ENCODE measurements at regions of chr18 and their contacts with region 1.

Region 1: DNA sequence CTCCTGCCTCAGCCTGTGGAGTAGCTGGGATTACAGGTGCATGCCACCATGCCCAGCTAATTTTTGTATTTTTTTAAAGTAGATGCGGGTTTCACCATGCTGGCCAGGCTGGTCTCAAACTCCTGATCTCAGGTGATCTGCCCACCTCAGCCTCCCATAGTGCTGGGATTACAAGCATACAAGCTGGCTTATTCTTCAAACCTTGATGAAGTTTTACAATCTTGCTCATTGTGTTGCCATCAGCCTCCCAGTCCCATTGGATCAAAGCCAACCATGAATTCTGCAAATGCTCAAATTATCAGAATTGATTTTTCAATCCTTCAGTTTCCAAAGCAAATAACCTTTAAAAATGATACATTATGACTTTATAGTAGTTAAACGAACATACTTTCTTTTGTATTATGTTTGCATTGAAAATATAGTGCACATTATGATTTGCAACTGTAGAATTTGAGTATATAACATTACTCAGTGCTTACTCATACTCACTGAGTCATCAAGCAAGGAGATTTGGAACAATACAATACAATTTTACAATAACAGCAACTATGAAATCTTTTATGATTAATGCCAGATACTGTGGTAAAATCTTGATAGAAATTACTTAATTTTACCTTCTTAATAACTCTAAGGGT is 1491.9 kb upstream of the CELF4 start:
- DNase-seq: peak; percentile 81
- H3K4me3 ChIP-seq: no peak overlapping the region
- H3K27ac ChIP-seq: peak overlapping the region; percentile 88
- H3K4me1 ChIP-seq: peaks cover 27% of the 10 kb centered on the region
- H3K27me3 ChIP-seq: peaks cover 3 to 7% of the 10 kb centered on the region in 2 experiments
- CTCF ChIP-seq: no peak
- POLR2A ChIP-seq: no peak

Region 2: DNA sequence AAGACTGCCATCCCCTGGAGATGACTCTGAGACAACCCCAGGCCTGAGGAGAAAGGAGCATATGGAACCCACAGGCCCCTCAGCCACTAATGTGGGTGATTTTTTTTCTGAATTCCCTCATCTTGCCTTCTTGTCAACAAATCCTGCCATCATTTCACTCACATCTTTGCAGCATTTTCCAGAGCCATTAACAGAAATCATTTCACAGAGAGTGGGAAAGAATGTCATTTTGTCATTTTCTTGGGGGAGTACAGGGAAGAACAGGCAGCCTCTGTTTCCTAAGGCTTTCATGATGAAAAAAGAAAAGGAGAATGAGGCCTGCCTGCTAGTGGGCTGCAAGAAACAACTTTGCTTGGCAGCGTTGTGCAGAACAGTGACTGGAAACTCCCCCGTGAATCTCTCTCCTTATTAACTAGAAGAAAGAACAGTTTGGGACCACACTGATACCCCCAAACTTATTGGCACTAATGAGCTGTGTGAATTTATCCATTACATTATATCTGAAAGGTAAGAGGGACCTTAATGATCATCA is 27.4 kb before region 1 on chr18:
- CTCF ChIA-PET with region 1: no interaction called
- POLR2A ChIA-PET with region 1: no interaction called
- dilution Hi-C with region 1: no loop called
- intact Hi-C with region 1: no loop called
- DNase-seq: no peak
- H3K4me3 ChIP-seq: no peak overlapping the region
- H3K27ac ChIP-seq: no peak overlapping the region
- H3K4me1 ChIP-seq: no peaks in the 10 kb centered on the region
- H3K27me3 ChIP-seq: no peaks in the 10 kb centered on the region
- CTCF ChIP-seq: no peak
- POLR2A ChIP-seq: no peak

Region 3: DNA sequence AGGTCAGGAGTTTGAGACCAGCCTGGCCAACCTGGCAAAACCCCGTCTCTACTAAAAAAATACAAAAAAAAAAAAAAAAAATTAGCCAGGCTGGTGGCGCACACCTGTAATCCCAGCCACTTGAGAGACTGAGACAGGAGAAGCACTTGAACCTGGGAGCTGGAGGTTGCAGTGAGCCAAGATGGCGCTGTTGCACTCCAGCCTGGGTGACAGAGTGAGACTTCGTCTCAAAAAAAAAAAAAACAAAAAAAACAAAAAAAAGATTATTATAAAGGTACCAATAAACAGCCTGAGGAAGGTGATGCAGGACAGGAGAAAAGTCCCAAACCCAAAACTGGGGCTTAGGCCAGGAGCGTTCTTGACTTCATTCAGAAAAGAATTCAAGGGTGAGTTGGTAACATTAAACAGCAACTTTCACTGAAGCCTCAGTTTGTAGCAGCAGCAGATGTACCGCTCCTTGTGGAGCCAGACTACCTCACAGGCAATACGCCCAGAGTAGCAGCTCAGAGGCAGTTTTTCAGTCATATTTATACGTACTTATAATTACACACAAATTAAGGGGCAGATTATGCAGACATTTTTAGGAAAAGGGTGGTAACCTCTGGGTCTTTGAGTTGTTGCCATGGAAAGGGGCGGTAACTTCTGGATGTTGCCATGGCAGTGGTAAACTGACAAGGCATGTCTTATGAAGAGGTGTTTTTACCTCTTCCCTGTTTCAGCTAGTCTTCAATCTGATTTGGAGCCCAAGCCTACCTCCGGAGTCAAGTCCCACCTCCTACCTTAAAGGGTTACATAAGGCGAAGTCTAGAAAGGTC is 104.7 kb after region 1 on chr18:
- CTCF ChIA-PET with region 1: no interaction called
- POLR2A ChIA-PET with region 1: no interaction called
- dilution Hi-C with region 1: no loop called
- intact Hi-C with region 1: no loop called
- DNase-seq: no peak
- H3K4me3 ChIP-seq: no peak overlapping the region
- H3K27ac ChIP-seq: no peak overlapping the region
- H3K4me1 ChIP-seq: no peaks in the 10 kb centered on the region
- H3K27me3 ChIP-seq: no peaks in the 10 kb centered on the region
- CTCF ChIP-seq: no peak
- POLR2A ChIP-seq: no peak

Region 4: GRCh38 chr18:39462436-39462835 is 404.9 kb after region 1 on chr18:
- CTCF ChIA-PET with region 1: no interaction called
- POLR2A ChIA-PET with region 1: no interaction called
- dilution Hi-C with region 1: no loop called
- intact Hi-C with region 1: loop called (anchors 10 kb)
- DNase-seq: peak; percentile 89
- H3K4me3 ChIP-seq: no peak overlapping the region
- H3K27ac ChIP-seq: peak overlapping the region; percentile 79
- H3K4me1 ChIP-seq: peaks cover 17% of the 10 kb centered on the region
- H3K27me3 ChIP-seq: no peaks in the 10 kb centered on the region
- CTCF ChIP-seq: no peak
- POLR2A ChIP-seq: no peak